SK-N-SH (cell line): ENCODE measurements at regions of chr5 and their contacts with region 1.

Region 1: DNA sequence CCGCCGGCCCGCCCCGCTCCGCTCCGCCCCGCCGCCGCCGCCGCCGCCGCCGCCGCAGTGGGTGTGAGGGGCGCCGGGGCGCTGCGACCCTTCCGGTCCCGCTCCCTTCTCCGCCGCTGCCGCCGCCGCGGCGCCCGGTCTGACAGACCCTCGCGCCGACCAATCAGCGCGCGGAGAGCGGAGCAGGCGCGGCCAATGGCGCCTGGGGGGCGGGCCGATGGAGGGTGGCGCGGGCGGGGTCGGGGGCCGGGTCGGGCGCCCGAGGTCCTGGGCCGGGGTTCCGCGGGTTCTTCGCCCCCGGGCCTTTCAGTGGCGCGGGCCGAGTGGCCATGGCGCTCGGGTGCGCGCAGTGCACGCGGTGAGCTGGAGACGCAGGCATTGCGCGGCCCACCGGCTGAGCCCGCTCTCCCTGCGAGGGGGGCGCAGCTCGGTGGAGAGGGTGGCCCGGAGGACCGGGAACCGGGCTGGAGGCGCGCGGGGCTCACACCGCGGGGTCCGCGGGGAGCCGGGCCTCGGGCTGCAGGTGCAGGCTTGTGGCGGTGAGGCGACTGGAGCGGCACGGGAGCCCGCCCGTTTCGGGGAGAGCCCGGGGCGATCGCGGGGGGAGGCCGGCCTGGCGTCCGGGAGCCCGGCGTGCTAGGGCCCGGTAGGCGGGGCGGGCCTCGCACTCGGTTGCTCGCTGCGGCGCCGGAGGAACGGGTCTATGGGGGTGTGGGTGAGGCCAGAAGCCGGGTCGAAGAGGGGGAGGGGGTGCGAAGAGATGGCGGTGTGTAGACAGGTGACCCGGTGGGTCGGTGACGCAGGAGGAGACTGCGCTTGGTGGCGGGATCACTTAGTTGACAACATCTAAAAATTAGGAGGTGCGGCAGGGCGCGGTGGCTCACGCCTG is at the start of gene MAPK9:
- DNase-seq: peak; percentile 97
- H3K4me3 ChIP-seq: peak within 1 kb of the TSS; percentile 85 to 92
- H3K27ac ChIP-seq: peak within 1 kb of the TSS; percentile 47 to 81; a peak in 3 of 4 replicates
- H3K4me1 ChIP-seq: peaks cover 0 to 39% of the 10 kb centered on the region in 2 experiments; a peak in 2 of 4 replicates
- H3K27me3 ChIP-seq: no peaks in the 10 kb centered on the region
- CTCF ChIP-seq: peak; percentile 16; the same call in 1 of the 2 replicates
- EP300 ChIP-seq: no peak
- RAD21 ChIP-seq: no peak
- polyA plus RNA-seq, gene MAPK9: 23.9 and 26.2 TPM in 2 replicates

Region 2: GRCh38 chr5:180304431-180305375 is 12.5 kb after region 1 on chr5:
- CTCF ChIA-PET with region 1: interaction called, 98 read pairs
- POLR2A ChIA-PET with region 1: no interaction called
- DNase-seq: peak; percentile 74
- H3K4me3 ChIP-seq: no peak overlapping the region
- H3K27ac ChIP-seq: peak overlapping the region in 1 of 2 experiments; percentile 4; a peak in 1 of 4 replicates
- H3K4me1 ChIP-seq: peaks cover 0 to 19% of the 10 kb centered on the region in 2 experiments; a peak in 1 of 4 replicates
- H3K27me3 ChIP-seq: no peaks in the 10 kb centered on the region
- CTCF ChIP-seq: no peak
- EP300 ChIP-seq: peak in 1 of 2 experiments; percentile 43; a peak in 1 of 4 replicates
- RAD21 ChIP-seq: no peak